ENCODE measurements at regions of chr17 and their contacts with region 1.

Region 1: GRCh38 chr17:57892146-57892828 is 42.4 kb upstream of the MRPS23 start:
- DNase-seq: peak; percentile 84
- ATAC-seq: peak; percentile 84
- H3K4me3 ChIP-seq: peak overlapping the region; percentile 64 to 83 (median 68); a peak in 5 of 6 replicates
- H3K27ac ChIP-seq: peak overlapping the region; percentile 93
- H3K4me1 ChIP-seq: peaks cover 60% of the 10 kb centered on the region
- H3K27me3 ChIP-seq: no peaks in the 10 kb centered on the region; a peak in 1 of 5 replicates
- CTCF ChIP-seq: peak; percentile 99
- EP300 ChIP-seq: peak in 1 of 2 experiments; percentile 35; a peak in 1 of 4 replicates
- POLR2A ChIP-seq: no peak
- RAD21 ChIP-seq: peak; percentile 96

Region 2: DNA sequence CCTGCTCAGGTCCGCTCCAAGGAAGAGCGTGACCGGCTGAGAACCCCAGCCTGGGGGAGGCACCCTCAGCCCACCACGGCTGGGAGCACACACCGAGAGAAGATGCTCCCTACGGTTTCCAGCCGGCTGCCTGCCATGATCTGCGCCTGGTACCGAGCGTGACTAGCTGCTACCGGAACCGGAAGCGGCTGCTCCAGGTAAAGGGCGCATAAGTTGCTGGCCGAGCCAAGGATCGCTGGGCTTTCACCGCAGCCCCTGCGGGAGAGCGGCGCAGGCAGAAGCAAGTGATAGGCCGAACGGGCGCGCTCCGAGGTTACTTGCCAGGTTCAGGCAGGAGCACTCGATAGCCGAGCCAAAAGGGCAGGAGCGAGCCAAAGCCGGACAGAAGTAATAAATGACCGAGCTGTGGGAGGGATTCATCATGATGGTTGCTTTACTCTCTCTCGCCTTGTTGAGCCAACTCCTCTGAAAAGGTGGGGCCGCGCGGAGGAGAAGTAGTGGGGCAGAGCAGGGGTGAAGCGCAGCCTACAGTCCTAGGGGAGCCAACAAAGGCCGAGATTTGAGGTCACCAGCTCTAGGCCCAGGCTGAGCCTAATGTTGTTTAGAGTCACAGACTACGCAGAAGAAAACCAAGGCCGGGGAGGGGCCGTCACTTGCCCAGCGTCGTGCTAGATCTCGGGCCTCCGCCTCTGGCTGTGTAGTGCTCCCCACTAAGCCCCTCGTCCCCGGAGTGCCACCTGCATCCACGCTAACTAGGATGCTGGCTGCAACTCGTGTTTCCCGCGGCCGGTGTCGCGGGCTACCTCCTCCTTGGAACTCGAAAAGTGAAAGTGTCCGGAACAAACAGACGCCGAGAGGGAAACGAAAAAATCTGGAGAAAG is 42.2 kb before region 1 on chr17 and contains the start of gene MRPS23:
- CTCF ChIA-PET with region 1: no interaction called
- POLR2A ChIA-PET with region 1: interaction called, 30 read pairs
- in situ Hi-C with region 1: no loop called
- intact Hi-C with region 1: loop called (anchors 5 kb)
- DNase-seq: peak; percentile 99
- ATAC-seq: peak; percentile 82
- H3K4me3 ChIP-seq: peak within 1 kb of the TSS; percentile 88 to 93 (median 90)
- H3K27ac ChIP-seq: peak within 1 kb of the TSS; percentile 86
- H3K4me1 ChIP-seq: peaks cover 62% of the 10 kb centered on the region
- H3K27me3 ChIP-seq: no peaks in the 10 kb centered on the region; a peak in 1 of 5 replicates
- CTCF ChIP-seq: peak; percentile 34; the same call in 1 of the 2 replicates
- EP300 ChIP-seq: peak; percentile 55 to 76; a peak in 3 of 4 replicates
- POLR2A ChIP-seq: peak; percentile 80 to 86
- RAD21 ChIP-seq: peak; percentile 37; the same call in 1 of the 2 replicates
- total RNA-seq, gene MRPS23: 181 and 283 TPM in 2 replicates

Region 3: DNA sequence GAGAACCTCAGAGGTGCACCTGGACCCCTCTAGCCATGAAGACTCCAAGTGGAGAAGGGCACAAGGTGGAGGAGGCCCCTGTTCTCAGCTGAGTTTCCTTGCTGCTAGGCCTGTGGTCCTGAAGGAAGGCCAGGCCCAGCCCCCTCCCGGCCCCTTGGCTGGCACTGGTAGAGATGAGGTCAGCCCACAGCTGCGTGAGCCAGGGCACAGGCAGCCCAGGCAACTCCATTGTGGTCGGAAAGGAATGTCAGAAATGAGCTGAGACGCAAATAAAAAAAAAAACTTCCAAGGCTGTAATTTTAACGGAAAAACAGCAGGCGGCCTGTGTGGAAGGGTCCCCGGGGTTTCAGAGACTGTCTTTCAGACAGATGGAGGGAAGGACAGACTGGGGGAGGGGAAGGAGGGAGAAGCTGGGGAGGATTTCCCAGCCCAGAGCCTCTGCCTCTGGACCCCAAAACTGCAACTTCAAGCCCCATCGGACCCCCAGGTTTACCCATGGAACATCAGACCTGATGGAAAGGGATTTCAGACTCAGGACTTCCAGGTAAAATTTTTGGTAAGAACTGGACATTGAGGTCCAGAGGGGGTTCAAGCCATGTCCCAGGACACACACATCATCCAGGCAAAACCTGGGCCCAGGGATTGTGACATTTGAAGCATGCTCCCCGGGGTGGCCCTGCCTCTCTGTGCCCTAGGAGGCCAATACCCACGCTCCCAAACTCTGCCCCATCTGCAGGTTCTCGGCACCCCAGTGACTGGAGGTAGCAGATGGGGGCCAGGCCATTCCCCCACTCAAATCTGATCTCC is 16.8 kb before region 1 on chr17:
- CTCF ChIA-PET with region 1: interaction called, 5 read pairs
- POLR2A ChIA-PET with region 1: interaction called, 36 read pairs
- in situ Hi-C with region 1: no loop called
- intact Hi-C with region 1: loop called (anchors 1 kb)
- DNase-seq: peak; percentile 93
- ATAC-seq: peak; percentile 85
- H3K4me3 ChIP-seq: peak overlapping the region in 1 of 3 experiments; percentile 15; a peak in 1 of 6 replicates
- H3K27ac ChIP-seq: peak overlapping the region; percentile 64
- H3K4me1 ChIP-seq: peaks cover 68% of the 10 kb centered on the region
- H3K27me3 ChIP-seq: no peaks in the 10 kb centered on the region
- CTCF ChIP-seq: peak; percentile 62
- EP300 ChIP-seq: peak in 1 of 2 experiments; percentile 51; a peak in 1 of 4 replicates
- POLR2A ChIP-seq: no peak
- RAD21 ChIP-seq: peak; percentile 60; the same call in 1 of the 2 replicates

Region 4: GRCh38 chr17:57939797-57940196 is 47.5 kb after region 1 on chr17:
- CTCF ChIA-PET with region 1: no interaction called
- POLR2A ChIA-PET with region 1: interaction called, 22 read pairs
- in situ Hi-C with region 1: no loop called
- intact Hi-C with region 1: loop called (anchors 1 kb)
- DNase-seq: no peak
- ATAC-seq: no peak
- H3K4me3 ChIP-seq: no peak overlapping the region
- H3K27ac ChIP-seq: no peak overlapping the region
- H3K4me1 ChIP-seq: peaks cover 74% of the 10 kb centered on the region
- H3K27me3 ChIP-seq: no peaks in the 10 kb centered on the region
- CTCF ChIP-seq: no peak
- EP300 ChIP-seq: no peak
- POLR2A ChIP-seq: no peak
- RAD21 ChIP-seq: no peak

Region 5: GRCh38 chr17:57955183-57955931 is 63.1 kb after region 1 on chr17 and contains the start of gene CUEDC1:
- CTCF ChIA-PET with region 1: no interaction called
- POLR2A ChIA-PET with region 1: interaction called, 31 read pairs
- in situ Hi-C with region 1: no loop called
- intact Hi-C with region 1: loop called (anchors 1 kb)
- DNase-seq: no peak
- ATAC-seq: peak; percentile 75
- H3K4me3 ChIP-seq: peak within 1 kb of the TSS; percentile 71 to 92 (median 73)
- H3K27ac ChIP-seq: peak within 1 kb of the TSS; percentile 15
- H3K4me1 ChIP-seq: peaks cover 65% of the 10 kb centered on the region
- H3K27me3 ChIP-seq: peaks cover 16 to 39% of the 10 kb centered on the region in 2 experiments
- CTCF ChIP-seq: peak; percentile 52
- EP300 ChIP-seq: no peak
- POLR2A ChIP-seq: no peak
- RAD21 ChIP-seq: 0 out of 2 replicates have a peak, but pooled peaks have one; percentile 6
- total RNA-seq, gene CUEDC1: 4.2 and 7.4 TPM in 2 replicates

Region 6: GRCh38 chr17:57995076-57995956 is 103.0 kb after region 1 on chr17:
- CTCF ChIA-PET with region 1: interaction called, 12 read pairs
- POLR2A ChIA-PET with region 1: interaction called, 37 read pairs
- in situ Hi-C with region 1: no loop called
- intact Hi-C with region 1: loop called (anchors 1 kb)
- DNase-seq: peak; percentile 87
- ATAC-seq: peak; percentile 78
- H3K4me3 ChIP-seq: no peak overlapping the region
- H3K27ac ChIP-seq: peak overlapping the region; percentile 4
- H3K4me1 ChIP-seq: peaks cover 57% of the 10 kb centered on the region
- H3K27me3 ChIP-seq: no peaks in the 10 kb centered on the region
- CTCF ChIP-seq: peak; percentile 93
- EP300 ChIP-seq: no peak
- POLR2A ChIP-seq: peak; percentile 41 to 80; a peak in 2 of 4 replicates
- RAD21 ChIP-seq: peak; percentile 89

Region 7: DNA sequence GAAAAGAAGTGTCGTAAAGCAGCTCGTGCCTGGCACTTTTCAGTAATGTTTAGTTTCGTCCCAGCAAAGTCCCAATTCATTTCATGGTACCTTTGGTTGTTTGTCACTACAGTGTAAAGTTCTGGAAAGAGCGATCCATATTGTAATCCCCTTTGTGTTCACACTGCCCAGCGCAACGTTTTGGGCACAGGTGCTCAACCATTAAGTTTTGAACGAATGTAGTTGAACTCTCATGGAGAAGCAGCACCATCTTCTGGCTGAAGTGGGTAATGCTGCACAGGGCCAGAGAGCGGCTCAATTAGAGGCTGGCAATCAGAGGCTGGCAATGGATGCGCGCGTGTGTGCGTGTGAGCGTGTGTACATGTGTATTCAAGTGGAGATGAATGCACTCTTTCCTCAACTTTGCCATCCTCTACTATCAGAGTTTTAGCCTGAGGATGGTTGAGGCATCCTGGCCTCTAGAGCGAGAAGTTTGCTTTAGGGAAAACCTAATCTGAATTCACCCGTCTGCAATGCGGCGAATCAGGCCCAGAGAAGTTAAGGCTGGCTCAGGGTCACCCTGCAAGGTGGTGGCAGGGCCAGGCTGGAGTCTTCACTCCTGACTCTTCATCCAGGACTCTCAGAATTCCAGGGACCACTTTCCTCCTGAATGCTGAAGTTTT is 220.8 kb after region 1 on chr17:
- CTCF ChIA-PET with region 1: interaction called, 8 read pairs
- POLR2A ChIA-PET with region 1: no interaction called
- in situ Hi-C with region 1: loop called (anchors 10 kb)
- intact Hi-C with region 1: no loop called
- DNase-seq: peak; percentile 70
- ATAC-seq: peak; percentile 84
- H3K4me3 ChIP-seq: no peak overlapping the region
- H3K27ac ChIP-seq: no peak overlapping the region
- H3K4me1 ChIP-seq: no peaks in the 10 kb centered on the region
- H3K27me3 ChIP-seq: peaks cover 1 to 4% of the 10 kb centered on the region in 2 experiments; a peak in 3 of 5 replicates
- CTCF ChIP-seq: peak; percentile 98
- EP300 ChIP-seq: no peak
- POLR2A ChIP-seq: no peak
- RAD21 ChIP-seq: peak; percentile 93

Measured in HepG2 (cell line).